HCT116 (cell line): ENCODE measurements at regions of chr6 and their contacts with region 1.

Region 1: GRCh38 chr6:166825553-166826145 is 130.7 kb downstream of the RNASET2 start:
- DNase-seq: no peak
- ATAC-seq: no peak
- H3K4me3 ChIP-seq: no peak overlapping the region
- H3K27ac ChIP-seq: no peak overlapping the region
- H3K4me1 ChIP-seq: no peaks in the 10 kb centered on the region
- H3K27me3 ChIP-seq: no peaks in the 10 kb centered on the region
- CTCF ChIP-seq: no peak
- POLR2A ChIP-seq: no peak
- RAD21 ChIP-seq: no peak

Region 2: DNA sequence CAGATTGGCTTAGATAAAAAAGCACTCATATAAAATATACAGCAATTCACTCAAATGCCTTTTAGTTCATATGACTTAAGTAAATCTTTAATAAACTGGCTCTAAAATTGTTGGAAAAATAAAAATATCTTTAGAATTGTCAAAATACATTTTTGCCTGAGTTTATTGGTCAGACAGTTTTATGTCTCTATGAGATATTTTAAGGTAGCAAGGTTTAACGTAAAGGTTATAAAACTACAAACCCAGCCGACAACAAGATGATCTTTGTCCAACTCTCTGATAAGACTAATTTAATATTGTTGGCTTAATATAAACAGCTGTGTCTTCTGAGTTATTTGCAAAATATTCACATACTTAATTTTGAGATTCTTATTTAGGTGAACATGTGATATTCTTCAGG is 91.2 kb after region 1 on chr6:
- CTCF ChIA-PET with region 1: no interaction called
- POLR2A ChIA-PET with region 1: no interaction called
- RAD21 ChIA-PET with region 1: no interaction called
- intact Hi-C with region 1: loop called (anchors 5 kb)
- DNase-seq: no peak
- ATAC-seq: no peak
- H3K4me3 ChIP-seq: no peak overlapping the region
- H3K27ac ChIP-seq: no peak overlapping the region
- H3K4me1 ChIP-seq: no peaks in the 10 kb centered on the region
- H3K27me3 ChIP-seq: no peaks in the 10 kb centered on the region
- CTCF ChIP-seq: no peak
- POLR2A ChIP-seq: no peak
- RAD21 ChIP-seq: no peak